ENCODE measurements at regions of chr7 and their contacts with region 1.

Region 1: DNA sequence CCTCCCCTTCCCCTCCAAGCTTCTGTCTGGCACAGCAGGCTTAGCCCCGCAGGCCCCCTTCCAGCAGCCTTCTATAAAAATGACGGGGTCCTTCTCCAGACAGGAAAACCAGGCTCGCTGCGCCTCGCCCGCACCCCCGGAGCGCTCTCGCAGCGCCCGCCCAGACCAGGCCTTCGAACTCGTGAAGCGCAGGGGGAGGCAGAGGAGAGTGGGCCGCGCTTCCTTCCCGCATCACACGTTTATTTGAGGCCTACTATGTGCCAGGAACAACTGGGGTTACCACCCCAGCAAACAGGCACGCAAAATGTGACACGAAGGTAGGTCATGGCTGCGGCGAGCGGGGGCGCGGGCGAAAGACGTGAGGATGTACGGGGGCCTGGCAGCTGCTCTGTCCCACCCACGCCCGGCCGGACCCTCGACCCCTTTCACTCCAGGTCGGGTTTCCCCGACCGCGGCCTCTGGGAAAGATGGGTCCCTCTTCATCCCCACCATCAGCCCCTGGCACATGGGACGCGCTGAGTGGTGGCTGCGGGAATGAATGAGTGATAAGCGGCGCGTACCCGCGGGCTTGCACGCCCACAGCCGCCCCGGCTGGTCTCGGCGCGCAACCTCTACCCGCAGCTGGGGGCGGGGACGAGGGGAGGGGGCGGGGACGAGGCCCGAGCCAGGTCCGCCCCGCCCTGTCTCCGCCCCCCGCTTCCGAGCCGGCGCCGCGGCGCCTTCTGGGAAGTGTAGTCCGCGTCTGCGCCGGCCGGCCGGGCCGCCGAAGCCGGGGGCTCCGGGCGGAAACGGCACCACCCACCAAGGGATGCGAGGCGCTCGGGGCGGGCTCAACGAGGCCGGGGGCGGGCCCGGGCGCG is 59.1 kb downstream of the ZNF467 start:
- DNase-seq: peak; percentile 82
- ATAC-seq: peak; percentile 98
- H3K4me3 ChIP-seq: peak overlapping the region; percentile 86
- H3K27ac ChIP-seq: no peak overlapping the region; the same call in 1 of the 2 replicates
- H3K4me1 ChIP-seq: peaks cover 12% of the 10 kb centered on the region
- H3K27me3 ChIP-seq: no peaks in the 10 kb centered on the region
- CTCF ChIP-seq: no peak
- POLR2A ChIP-seq: peak; percentile 19; the same call in 1 of the 2 replicates
- RAD21 ChIP-seq: no peak

Region 2: DNA sequence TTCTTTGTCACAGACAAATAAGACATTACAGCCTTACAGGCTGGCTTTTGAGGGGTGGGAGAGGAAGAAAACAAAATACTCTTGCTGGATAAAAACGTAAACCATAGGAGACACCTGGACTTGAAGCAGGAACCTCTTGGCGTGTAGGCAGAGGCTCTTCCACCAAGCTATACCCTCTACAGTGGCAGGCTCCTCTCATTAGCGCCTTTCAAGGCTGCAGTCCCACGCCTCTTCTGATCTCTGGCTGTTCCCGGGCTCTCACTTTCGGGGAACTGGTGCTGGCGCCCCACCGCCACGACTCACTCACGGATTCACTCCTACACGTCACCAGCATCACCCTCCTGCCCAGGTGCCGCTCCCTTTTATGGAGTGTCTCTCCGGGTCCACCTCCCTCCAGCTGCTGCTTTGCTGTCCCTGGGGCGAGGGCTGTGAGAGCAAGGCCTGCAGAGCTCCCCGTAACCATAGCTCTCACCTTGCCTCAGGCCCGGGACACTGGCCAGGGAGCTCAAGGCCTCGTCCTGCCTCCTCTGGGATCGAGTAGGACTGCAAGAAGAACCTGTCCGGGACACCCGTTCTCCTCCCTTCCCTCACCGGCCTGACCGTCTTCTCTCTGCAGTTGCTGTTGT is 316.0 kb before region 1 on chr7:
- CTCF ChIA-PET with region 1: no interaction called
- POLR2A ChIA-PET with region 1: no interaction called
- dilution Hi-C with region 1: no loop called
- in situ Hi-C with region 1: no loop called
- intact Hi-C with region 1: no loop called
- DNase-seq: no peak
- ATAC-seq: no peak
- H3K4me3 ChIP-seq: no peak overlapping the region
- H3K27ac ChIP-seq: no peak overlapping the region
- H3K4me1 ChIP-seq: no peaks in the 10 kb centered on the region
- H3K27me3 ChIP-seq: peaks cover 6% of the 10 kb centered on the region
- CTCF ChIP-seq: no peak
- POLR2A ChIP-seq: no peak
- RAD21 ChIP-seq: no peak

Region 3: GRCh38 chr7:149771721-149772240 is 57.5 kb after region 1 on chr7:
- CTCF ChIA-PET with region 1: no interaction called
- POLR2A ChIA-PET with region 1: no interaction called
- dilution Hi-C with region 1: no loop called
- in situ Hi-C with region 1: no loop called
- intact Hi-C with region 1: loop called (anchors 5 kb)
- DNase-seq: peak; percentile 70
- ATAC-seq: peak; percentile 99
- H3K4me3 ChIP-seq: peak overlapping the region; percentile 49
- H3K27ac ChIP-seq: peak overlapping the region; percentile 58
- H3K4me1 ChIP-seq: no peaks in the 10 kb centered on the region; the same call in 1 of the 2 replicates
- H3K27me3 ChIP-seq: peaks cover 28% of the 10 kb centered on the region
- CTCF ChIP-seq: no peak
- POLR2A ChIP-seq: no peak
- RAD21 ChIP-seq: no peak

Measured in IMR-90 (cell line).